ENCODE measurements at regions of chr10 and their contacts with region 1.

Region 1: DNA sequence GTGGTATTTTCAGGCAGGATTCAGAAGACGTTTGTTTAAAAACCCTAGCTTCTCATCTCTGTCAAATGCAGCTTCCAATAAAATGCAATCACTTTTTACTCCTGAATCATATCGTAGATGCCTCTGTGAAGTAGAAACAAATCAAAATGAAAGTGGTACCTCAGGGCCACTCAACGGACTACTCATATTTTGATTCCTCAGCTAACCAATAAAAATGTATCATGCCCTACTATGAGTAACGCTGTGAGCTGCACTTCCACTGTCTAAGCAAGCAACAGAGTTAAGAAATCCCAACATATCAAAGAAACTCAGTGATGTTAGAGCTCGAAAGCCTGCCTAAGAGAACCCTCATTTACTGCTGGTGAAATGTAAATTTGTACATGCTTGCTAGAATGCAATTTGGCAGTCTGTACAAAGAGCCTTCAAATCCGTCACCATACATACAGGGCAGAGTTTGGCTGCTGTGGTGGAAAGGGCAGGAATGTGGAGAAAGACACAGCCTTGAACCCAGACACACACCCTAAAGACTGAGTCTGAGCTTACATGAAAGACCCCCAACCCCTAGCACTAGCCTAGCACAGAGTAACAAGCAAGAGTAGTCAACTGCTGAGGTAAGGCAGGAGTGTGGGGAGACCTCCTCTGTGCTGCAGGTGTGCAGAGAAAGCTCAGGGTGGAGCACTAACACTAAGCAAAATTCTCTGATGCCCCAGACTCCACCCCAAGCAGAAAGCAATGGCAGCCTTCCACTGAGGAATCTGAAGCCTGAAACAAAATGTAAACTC is 151.5 kb downstream of the ANK3 start:
- DNase-seq: peak; percentile 28
- ATAC-seq: peak; percentile 79
- H3K4me3 ChIP-seq: peak overlapping the region; percentile 49
- H3K27ac ChIP-seq: peak overlapping the region; percentile 65; the same call in 1 of the 2 replicates
- H3K4me1 ChIP-seq: peaks cover 16% of the 10 kb centered on the region
- H3K27me3 ChIP-seq: no peaks in the 10 kb centered on the region
- CTCF ChIP-seq: peak; percentile 38 to 53 (median 48)
- EP300 ChIP-seq: no peak
- POLR2A ChIP-seq: no peak
- RAD21 ChIP-seq: peak; percentile 77

Region 2: DNA sequence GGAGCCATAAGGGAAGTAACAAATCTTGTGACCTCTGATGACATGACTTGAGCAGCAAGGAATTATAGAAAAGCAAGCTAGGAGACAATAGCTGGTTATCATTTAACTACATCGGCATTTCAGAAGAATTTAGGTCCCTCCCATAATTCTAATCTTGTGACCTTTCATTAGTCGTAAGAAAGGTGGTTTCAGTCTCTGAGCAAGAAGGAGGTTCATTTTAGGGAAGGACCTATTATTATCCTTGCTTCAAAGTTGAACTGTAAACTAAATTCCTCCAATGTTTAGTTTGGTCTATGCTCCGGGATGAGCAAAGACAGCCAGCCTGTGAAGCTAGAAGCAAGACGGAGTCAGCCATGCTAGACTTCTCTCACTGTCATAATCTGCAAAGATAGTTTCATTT is 688.1 kb before region 1 on chr10:
- CTCF ChIA-PET with region 1: no interaction called
- POLR2A ChIA-PET with region 1: no interaction called
- RAD21 ChIA-PET with region 1: no interaction called
- SMC1A ChIA-PET with region 1: no interaction called
- in situ Hi-C with region 1: no loop called
- intact Hi-C with region 1: no loop called
- DNase-seq: no peak
- ATAC-seq: no peak
- H3K4me3 ChIP-seq: no peak overlapping the region
- H3K27ac ChIP-seq: no peak overlapping the region
- H3K4me1 ChIP-seq: no peaks in the 10 kb centered on the region
- H3K27me3 ChIP-seq: no peaks in the 10 kb centered on the region
- CTCF ChIP-seq: no peak
- EP300 ChIP-seq: no peak
- POLR2A ChIP-seq: no peak
- RAD21 ChIP-seq: no peak

Region 3: DNA sequence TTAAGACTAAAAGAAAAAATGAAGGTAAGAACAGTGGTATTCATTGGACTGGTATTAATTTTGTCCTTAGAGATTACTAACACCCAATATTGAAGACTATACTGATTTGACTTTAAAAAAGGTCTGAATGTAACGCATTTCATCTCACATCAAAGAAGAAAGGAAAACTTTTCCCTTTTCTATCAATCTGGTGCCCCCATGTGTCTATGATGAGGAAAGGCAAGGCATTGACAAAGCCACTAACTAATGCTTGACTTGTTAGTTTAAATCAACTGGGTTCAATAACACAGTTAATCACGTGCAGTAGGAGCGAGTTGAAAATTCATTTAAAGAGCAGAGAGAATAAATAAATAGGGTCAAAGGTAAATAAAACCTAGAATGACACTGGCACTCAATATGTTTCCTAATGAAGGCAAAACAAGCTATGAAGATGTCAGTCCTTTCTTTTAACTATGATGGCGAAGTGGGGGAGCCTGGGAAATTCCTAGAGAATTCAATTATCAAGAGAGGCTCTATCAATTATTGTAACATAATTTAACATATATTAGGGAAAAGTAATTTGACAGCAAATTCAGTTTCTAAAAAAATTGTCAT is 29.4 kb before region 1 on chr10:
- CTCF ChIA-PET with region 1: interaction called, 39 read pairs
- POLR2A ChIA-PET with region 1: no interaction called
- RAD21 ChIA-PET with region 1: interaction called, 9 read pairs
- SMC1A ChIA-PET with region 1: interaction called, 18 read pairs
- in situ Hi-C with region 1: no loop called
- intact Hi-C with region 1: no loop called
- DNase-seq: no peak
- ATAC-seq: peak; percentile 67
- H3K4me3 ChIP-seq: no peak overlapping the region
- H3K27ac ChIP-seq: no peak overlapping the region
- H3K4me1 ChIP-seq: no peaks in the 10 kb centered on the region
- H3K27me3 ChIP-seq: peaks cover 0 to 3% of the 10 kb centered on the region in 2 experiments; a peak in 1 of 4 replicates
- CTCF ChIP-seq: peak; percentile 63 to 68 (median 64); a peak in 5 of 6 replicates
- EP300 ChIP-seq: no peak
- POLR2A ChIP-seq: no peak
- RAD21 ChIP-seq: peak; percentile 86

Region 4: GRCh38 chr10:60335708-60336107 is 97.5 kb after region 1 on chr10:
- CTCF ChIA-PET with region 1: interaction called, 17 read pairs
- POLR2A ChIA-PET with region 1: no interaction called
- RAD21 ChIA-PET with region 1: interaction called, 7 read pairs
- SMC1A ChIA-PET with region 1: interaction called, 17 read pairs
- in situ Hi-C with region 1: no loop called
- intact Hi-C with region 1: loop called (anchors 5 kb)
- DNase-seq: no peak
- ATAC-seq: peak; percentile 68
- H3K4me3 ChIP-seq: no peak overlapping the region
- H3K27ac ChIP-seq: no peak overlapping the region
- H3K4me1 ChIP-seq: no peaks in the 10 kb centered on the region
- H3K27me3 ChIP-seq: no peaks in the 10 kb centered on the region
- CTCF ChIP-seq: peak; percentile 26 to 48 (median 30); a peak in 4 of 6 replicates
- EP300 ChIP-seq: no peak
- POLR2A ChIP-seq: no peak
- RAD21 ChIP-seq: peak; percentile 64

Region 5: DNA sequence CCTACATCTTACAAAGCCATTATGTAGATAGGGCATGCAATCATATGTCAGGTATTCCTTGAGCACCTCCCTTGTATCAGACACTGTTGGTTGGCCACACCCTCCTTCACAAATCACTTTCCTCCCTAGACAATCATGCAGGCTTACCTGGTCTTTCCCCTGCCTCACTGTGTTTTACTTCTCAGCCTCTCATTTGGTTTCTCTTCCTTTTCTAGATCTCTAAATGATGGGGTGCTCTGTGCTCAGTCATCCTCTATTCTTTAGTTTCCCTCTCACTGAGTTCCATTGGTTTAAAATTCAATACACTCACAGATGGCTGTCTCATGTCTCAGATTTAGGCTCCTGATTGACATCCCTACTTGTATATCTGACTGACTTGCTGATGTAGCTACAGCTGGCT is 120.1 kb after region 1 on chr10:
- CTCF ChIA-PET with region 1: interaction called, 47 read pairs
- POLR2A ChIA-PET with region 1: no interaction called
- RAD21 ChIA-PET with region 1: interaction called, 9 read pairs
- SMC1A ChIA-PET with region 1: interaction called, 24 read pairs
- in situ Hi-C with region 1: no loop called
- intact Hi-C with region 1: no loop called
- DNase-seq: peak; percentile 55
- ATAC-seq: peak; percentile 95
- H3K4me3 ChIP-seq: no peak overlapping the region
- H3K27ac ChIP-seq: no peak overlapping the region
- H3K4me1 ChIP-seq: peaks cover 9% of the 10 kb centered on the region
- H3K27me3 ChIP-seq: no peaks in the 10 kb centered on the region
- CTCF ChIP-seq: no peak
- EP300 ChIP-seq: no peak
- POLR2A ChIP-seq: no peak
- RAD21 ChIP-seq: no peak

Region 6: DNA sequence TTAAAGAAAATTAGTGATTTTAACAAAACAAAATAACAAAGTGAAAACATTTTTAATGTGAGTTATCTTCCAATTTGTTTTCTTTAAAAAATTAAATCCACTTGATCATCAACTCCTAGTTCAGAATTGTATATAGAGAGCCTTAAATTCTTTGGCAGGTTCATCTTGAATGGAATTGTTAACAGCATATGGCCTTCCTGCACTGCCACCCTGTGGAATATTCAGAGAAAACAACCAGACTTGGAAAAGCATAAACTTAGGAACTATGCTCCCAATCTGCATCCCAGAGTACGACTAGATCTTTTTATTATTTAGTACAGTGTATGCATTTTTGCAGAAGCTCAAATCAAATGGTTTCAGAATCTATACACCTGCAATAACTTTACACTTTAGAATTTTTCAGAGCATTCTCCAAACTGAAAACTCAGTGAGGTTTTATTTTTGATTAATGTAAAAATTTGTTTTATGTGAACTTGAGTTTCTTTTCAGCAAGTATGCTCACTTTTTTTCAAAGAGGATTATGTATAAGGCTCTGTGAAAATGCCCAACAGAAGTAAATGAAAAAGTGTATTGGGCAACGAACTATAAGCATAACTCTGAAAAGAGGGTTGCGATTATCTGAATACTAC is 196.4 kb after region 1 on chr10:
- CTCF ChIA-PET with region 1: interaction called, 57 read pairs
- POLR2A ChIA-PET with region 1: no interaction called
- RAD21 ChIA-PET with region 1: interaction called, 44 read pairs
- SMC1A ChIA-PET with region 1: interaction called, 40 read pairs
- in situ Hi-C with region 1: loop called (anchors 5 kb)
- intact Hi-C with region 1: loop called (anchors 1 kb)
- DNase-seq: no peak
- ATAC-seq: peak; percentile 64
- H3K4me3 ChIP-seq: no peak overlapping the region
- H3K27ac ChIP-seq: no peak overlapping the region
- H3K4me1 ChIP-seq: no peaks in the 10 kb centered on the region
- H3K27me3 ChIP-seq: no peaks in the 10 kb centered on the region
- CTCF ChIP-seq: peak; percentile 42 to 69 (median 46); a peak in 5 of 6 replicates
- EP300 ChIP-seq: no peak
- POLR2A ChIP-seq: no peak
- RAD21 ChIP-seq: peak; percentile 93

Region 7: DNA sequence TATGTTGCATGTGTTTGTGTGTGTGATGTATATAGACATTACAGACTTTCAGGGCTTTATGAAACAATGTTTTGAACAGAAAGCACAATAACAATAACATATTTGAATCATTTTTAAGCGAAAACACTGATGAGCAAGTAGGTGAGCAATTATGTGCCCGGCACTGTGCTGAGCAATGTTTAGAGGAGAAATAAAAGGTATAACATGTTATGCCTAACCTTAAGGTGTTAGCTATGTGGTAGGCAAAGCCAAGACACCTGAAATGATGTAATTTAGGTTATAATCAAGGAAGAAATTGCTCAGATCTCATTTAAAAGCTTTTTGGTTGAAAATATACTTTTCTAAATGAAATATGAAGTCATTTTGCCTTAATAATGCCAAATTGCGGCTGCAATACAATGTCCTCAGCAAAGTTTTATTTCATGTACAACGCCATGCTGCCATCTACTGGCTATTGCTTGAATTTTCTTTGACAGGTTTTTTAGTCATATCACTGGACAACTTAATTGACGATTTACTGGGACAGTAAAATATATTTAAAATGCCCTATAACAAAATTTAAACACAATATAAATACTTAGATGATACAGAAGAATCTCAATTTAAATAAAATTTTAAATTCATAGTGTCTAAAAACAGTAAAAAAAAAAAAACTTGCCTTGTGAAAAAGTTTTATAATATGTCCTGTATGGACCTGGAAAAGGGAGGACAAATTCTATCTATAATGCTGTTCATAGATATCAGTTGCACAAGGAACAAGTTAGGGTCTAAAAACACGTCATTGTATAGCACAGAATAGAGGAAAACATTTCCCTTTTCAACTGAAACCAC is 409.0 kb after region 1 on chr10:
- CTCF ChIA-PET with region 1: interaction called, 26 read pairs
- POLR2A ChIA-PET with region 1: no interaction called
- RAD21 ChIA-PET with region 1: interaction called, 7 read pairs
- SMC1A ChIA-PET with region 1: interaction called, 11 read pairs
- in situ Hi-C with region 1: no loop called
- intact Hi-C with region 1: loop called (anchors 10 kb)
- DNase-seq: peak; percentile 17
- ATAC-seq: peak; percentile 78
- H3K4me3 ChIP-seq: no peak overlapping the region
- H3K27ac ChIP-seq: no peak overlapping the region
- H3K4me1 ChIP-seq: no peaks in the 10 kb centered on the region
- H3K27me3 ChIP-seq: no peaks in the 10 kb centered on the region
- CTCF ChIP-seq: peak; percentile 59 to 72 (median 59)
- EP300 ChIP-seq: no peak
- POLR2A ChIP-seq: no peak
- RAD21 ChIP-seq: peak; percentile 77